ENCODE measurements at regions of chr13 and their contacts with region 1.

Region 1: DNA sequence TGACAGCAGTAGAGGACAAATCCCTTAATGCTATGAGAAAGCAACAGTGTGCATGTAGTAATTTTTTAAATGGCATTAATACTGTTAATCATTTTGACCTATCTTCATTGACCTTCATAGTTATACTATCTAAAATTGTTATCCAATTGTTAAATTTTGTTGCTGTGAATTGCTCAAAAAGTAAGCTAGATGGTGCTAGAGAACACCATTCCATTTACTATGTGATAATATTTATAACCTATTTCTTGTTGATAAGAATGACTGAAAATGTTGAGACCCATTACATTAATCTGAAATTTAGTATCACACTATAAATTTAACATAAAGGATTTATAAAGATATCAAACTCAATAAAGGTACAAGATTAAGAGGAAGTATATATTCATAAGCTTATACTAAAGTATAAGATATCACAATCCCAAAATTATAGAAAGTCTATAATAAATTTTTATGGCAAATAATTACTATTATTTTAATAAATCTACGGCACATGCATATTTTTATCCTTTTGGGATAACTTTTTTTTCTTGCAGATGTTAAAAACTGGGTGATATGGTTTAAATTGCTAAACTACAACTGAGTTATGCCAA is 1573.3 kb downstream of the PCDH9 start:
- DNase-seq: peak; percentile 30
- H3K4me3 ChIP-seq: no peak overlapping the region
- H3K27ac ChIP-seq: no peak overlapping the region
- H3K4me1 ChIP-seq: no peaks in the 10 kb centered on the region
- H3K27me3 ChIP-seq: no peaks in the 10 kb centered on the region
- CTCF ChIP-seq: peak; percentile 21 to 27
- POLR2A ChIP-seq: no peak

Region 2: GRCh38 chr13:64471916-64472315 is 1184.9 kb before region 1 on chr13:
- CTCF ChIA-PET with region 1: interaction called, 12 read pairs
- POLR2A ChIA-PET with region 1: no interaction called
- dilution Hi-C with region 1: no loop called
- intact Hi-C with region 1: no loop called
- DNase-seq: peak; percentile 66
- H3K4me3 ChIP-seq: no peak overlapping the region
- H3K27ac ChIP-seq: no peak overlapping the region
- H3K4me1 ChIP-seq: no peaks in the 10 kb centered on the region
- H3K27me3 ChIP-seq: no peaks in the 10 kb centered on the region
- CTCF ChIP-seq: peak in 1 of 2 donors; percentile 22
- POLR2A ChIP-seq: no peak

Region 3: DNA sequence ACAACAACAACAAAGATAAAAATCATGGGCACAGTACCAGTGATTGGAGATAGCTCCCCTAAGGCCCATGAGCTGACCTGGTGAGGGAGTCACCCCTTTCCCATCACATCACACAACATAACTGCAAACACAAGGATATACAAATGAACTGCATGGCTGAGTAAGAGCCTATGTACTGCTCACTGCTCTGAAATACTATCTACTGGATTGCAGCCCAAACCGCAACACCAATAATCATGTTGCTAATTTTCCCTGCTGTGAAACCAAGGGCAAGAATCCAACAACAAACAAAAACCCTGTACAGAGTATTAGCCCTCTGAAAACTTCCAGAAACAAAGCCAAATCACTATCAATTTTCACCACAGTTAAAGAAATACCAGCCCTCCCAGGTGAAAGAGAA is 319.9 kb before region 1 on chr13:
- CTCF ChIA-PET with region 1: no interaction called
- POLR2A ChIA-PET with region 1: no interaction called
- dilution Hi-C with region 1: no loop called
- intact Hi-C with region 1: no loop called
- DNase-seq: no peak
- H3K4me3 ChIP-seq: no peak overlapping the region
- H3K27ac ChIP-seq: no peak overlapping the region
- H3K4me1 ChIP-seq: no peaks in the 10 kb centered on the region
- H3K27me3 ChIP-seq: no peaks in the 10 kb centered on the region
- CTCF ChIP-seq: no peak
- POLR2A ChIP-seq: no peak

Region 4: DNA sequence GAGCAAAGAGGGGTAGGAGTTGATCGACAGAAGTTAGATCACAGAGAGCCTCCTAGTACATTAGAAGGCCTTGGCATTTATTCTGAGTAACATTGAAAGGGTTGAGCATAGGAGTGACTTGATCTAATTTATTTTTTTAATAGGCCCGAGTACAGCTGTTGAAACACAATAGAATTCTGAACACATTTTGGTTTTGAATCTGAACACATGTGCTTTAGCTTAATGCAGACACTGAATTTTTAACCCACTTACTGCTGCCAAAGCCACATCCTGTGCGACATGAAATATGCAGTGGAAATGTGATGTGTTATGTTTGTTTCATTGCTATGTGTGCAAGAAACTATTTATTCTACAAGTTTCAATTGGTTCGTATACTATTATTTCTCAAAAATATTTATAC is 67.4 kb after region 1 on chr13:
- CTCF ChIA-PET with region 1: no interaction called
- POLR2A ChIA-PET with region 1: no interaction called
- dilution Hi-C with region 1: no loop called
- intact Hi-C with region 1: no loop called
- DNase-seq: no peak
- H3K4me3 ChIP-seq: no peak overlapping the region
- H3K27ac ChIP-seq: no peak overlapping the region
- H3K4me1 ChIP-seq: peaks cover 3% of the 10 kb centered on the region
- H3K27me3 ChIP-seq: no peaks in the 10 kb centered on the region
- CTCF ChIP-seq: no peak
- POLR2A ChIP-seq: no peak

Region 5: DNA sequence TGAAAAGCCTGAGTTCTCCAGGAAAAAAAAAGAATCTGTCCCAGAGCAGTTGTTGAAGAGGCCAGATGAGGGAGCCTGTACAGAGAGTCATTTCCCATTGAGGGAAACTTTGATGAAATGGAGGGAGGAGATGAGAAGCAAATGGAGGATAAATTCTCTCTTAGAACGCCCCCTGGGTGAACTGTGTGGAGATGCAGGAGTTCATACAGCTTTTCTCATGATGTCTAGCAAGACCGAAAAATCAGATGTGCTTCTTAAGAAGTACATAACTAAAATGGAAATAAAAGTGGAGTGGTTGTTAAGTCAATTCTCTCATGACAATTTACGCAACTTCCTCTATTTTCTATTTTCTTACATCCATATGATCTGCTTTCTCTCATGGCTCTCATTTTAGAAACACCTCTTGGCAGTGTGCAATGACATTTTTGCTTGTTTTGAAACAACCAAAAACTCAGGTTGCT is 310.2 kb after region 1 on chr13:
- CTCF ChIA-PET with region 1: interaction called, 3 read pairs
- POLR2A ChIA-PET with region 1: no interaction called
- dilution Hi-C with region 1: no loop called
- intact Hi-C with region 1: loop called (anchors 10 kb)
- DNase-seq: peak; percentile 36
- H3K4me3 ChIP-seq: no peak overlapping the region
- H3K27ac ChIP-seq: no peak overlapping the region
- H3K4me1 ChIP-seq: no peaks in the 10 kb centered on the region
- H3K27me3 ChIP-seq: no peaks in the 10 kb centered on the region
- CTCF ChIP-seq: peak; percentile 18 to 27
- POLR2A ChIP-seq: no peak

Region 6: DNA sequence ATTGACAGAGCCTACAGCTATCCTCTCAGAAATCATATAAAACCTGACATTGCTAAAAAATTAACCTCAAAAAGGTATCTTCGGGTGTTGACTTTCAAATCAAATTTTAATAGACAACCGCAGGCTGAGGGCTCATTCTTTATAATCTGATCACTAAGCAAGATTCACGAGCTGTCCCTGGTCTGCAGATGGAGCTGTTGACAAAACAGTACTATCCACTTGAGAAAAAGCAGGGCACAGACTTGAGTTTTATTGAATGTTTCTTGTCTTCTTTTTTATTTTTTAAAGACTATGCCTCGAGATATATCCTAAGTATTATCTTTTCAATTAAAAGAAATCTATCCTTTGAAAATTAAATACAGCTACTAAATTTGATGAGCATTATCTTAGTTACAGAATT is 1032.8 kb after region 1 on chr13:
- CTCF ChIA-PET with region 1: interaction called, 11 read pairs
- POLR2A ChIA-PET with region 1: no interaction called
- dilution Hi-C with region 1: no loop called
- intact Hi-C with region 1: loop called (anchors 5 kb)
- DNase-seq: peak; percentile 26
- H3K4me3 ChIP-seq: no peak overlapping the region
- H3K27ac ChIP-seq: no peak overlapping the region
- H3K4me1 ChIP-seq: no peaks in the 10 kb centered on the region
- H3K27me3 ChIP-seq: no peaks in the 10 kb centered on the region
- CTCF ChIP-seq: peak in 1 of 2 donors; percentile 23
- POLR2A ChIP-seq: no peak

Region 7: GRCh38 chr13:67224148-67224846 is 1567.5 kb after region 1 on chr13:
- CTCF ChIA-PET with region 1: interaction called, 42 read pairs
- POLR2A ChIA-PET with region 1: no interaction called
- dilution Hi-C with region 1: no loop called
- intact Hi-C with region 1: loop called (anchors 1 kb)
- DNase-seq: peak; percentile 88
- H3K4me3 ChIP-seq: peak overlapping the region in 1 of 3 experiments; percentile 21
- H3K27ac ChIP-seq: no peak overlapping the region
- H3K4me1 ChIP-seq: peaks cover 15% of the 10 kb centered on the region
- H3K27me3 ChIP-seq: no peaks in the 10 kb centered on the region
- CTCF ChIP-seq: peak; percentile 51 to 60
- POLR2A ChIP-seq: no peak